ENCODE measurements at regions of chr11 and their contacts with region 1.

Region 1: DNA sequence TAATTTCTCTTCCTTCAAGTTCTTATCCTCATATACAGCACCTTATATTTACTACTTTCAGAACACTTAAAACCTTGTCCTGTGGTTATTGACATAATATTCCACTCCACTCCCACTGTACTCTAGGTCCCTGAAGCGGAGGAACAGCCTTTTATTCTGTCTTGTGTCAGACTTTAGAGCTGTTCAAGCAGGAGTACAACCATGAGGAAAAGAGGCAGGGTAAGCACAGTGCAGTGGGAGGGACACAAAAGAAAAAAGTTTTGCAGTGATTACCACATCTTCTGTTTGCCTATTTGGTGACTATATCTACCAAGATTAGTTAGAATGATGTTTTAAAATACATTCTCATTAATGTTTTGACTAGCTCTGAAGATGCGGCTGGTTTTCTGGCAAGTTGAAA is 122.0 kb upstream of the CEP126 start:
- DNase-seq: no peak

Region 2: DNA sequence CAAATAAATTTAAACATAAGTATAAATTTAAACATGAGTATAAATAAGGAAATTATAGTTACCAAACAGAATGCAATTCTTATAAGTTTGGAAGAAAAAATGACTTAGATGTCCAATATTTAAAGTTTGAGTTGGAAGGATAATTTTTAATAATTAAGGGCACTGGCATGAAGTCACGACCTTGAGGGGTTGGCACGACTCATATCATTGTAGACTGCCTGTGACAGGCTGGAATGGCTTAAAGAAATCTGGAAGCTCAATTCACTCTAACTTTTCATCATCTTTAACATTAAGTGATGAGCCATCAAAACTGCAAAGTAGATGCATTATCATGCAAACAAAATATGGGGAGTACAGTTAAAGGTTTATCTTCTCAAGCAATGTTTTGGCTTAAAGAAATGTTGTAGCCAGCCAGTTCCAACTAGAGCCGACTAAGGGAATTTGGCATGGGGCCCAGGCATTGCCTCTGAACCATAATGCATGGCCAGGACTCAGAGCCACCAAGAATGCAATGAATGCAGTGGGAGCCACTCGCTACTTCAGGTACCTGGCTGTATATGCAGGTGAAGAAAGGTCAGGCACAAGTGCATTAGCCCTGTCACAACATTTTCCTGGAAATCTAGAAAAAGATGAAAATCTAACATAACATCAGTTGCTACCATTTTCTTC is 696.6 kb before region 1 on chr11:
- intact Hi-C with region 1: no loop called
- DNase-seq: no peak

Region 3: DNA sequence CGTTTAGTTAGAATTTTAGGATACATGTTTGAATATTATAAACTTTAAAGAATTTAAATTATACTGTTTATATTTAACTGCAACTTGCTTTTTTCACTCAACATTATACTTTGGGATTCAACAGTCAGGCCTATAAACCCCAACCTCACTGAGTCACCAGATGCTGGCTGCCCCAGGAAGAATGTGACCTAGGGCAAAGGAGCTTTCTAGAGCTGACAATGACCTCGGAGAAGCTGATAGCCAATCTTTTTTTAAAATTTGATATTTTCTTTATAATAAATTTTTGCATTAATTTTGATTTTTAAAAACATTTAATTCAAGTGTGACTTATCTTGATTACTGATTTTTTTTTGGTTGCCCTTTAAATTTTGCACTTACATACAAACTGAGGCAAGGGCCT is 492.4 kb before region 1 on chr11:
- intact Hi-C with region 1: loop called in 1 of 2 experiments (anchors 5 kb)
- DNase-seq: no peak

Measured in posterior vena cava (tissue), 2 donors.